CD4-positive, alpha-beta memory T cell (primary cell): ENCODE measurements at regions of chr3 and their contacts with region 1.

Region 1: DNA sequence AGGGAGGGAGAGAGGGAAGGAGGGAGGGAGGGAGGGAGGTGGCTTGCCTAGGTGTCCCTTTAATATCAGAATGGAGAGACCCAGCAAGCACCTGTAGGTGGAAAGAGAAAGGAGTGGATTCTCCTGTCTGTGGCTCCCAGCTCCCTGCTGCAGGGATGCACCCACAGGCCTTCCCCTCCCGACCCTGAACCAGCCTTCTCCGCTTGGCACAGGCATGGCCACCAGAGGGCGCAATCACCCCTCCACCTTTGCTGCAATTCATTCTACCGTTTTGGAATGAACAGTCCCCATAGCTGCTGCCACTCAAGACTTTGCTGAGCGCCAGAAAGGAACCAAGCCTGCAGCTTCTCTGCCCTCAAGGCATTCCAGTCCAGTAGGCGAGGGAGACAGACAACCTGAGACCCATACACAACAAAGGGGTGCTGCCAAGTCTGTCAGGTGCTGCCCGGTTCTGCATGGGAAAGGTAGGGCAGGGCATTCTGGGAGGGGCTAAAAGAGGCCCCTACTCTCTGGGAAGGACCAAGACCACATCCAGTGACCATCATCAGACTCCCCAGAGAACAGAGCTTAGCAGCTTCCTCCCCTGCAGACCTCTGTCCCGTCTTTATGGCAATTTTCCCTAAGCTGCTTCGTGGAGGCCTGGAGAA is 4.9 kb downstream of the TLR9 start:
- DNase-seq: peak; percentile 81 to 86 (median 83)
- H3K4me3 ChIP-seq: no peak overlapping the region
- H3K4me3 Mint-ChIP-seq: peak overlapping the region in 7 of 8 donors; percentile 52 to 85 (median 67)
- H3K27ac ChIP-seq: peak overlapping the region; percentile 44
- H3K27ac Mint-ChIP-seq: peak overlapping the region; percentile 61 to 93 (median 84)
- H3K4me1 ChIP-seq: peaks cover 98% of the 10 kb centered on the region
- H3K4me1 Mint-ChIP-seq: peaks cover 50 to 99% (median 80%) of the 10 kb centered on the region in 4 donors
- H3K27me3 ChIP-seq: no peaks in the 10 kb centered on the region
- H3K27me3 Mint-ChIP-seq: no peaks in the 10 kb centered on the region

Region 2: GRCh38 chr3:52001443-52001974 is 219.0 kb before region 1 on chr3:
- CTCF ChIA-PET with region 1: interaction called, 4 read pairs
- POLR2A ChIA-PET with region 1: no interaction called
- intact Hi-C with region 1: loop called (anchors 1 kb)
- DNase-seq: peak; percentile 81 to 86 (median 84)
- H3K4me3 ChIP-seq: no peak overlapping the region
- H3K4me3 Mint-ChIP-seq: peak overlapping the region in 5 of 8 donors; percentile 4 to 26 (median 8)
- H3K27ac ChIP-seq: no peak overlapping the region
- H3K27ac Mint-ChIP-seq: peak overlapping the region in 4 of 7 donors; percentile 46 to 80 (median 60)
- H3K4me1 ChIP-seq: peaks cover 21% of the 10 kb centered on the region
- H3K4me1 Mint-ChIP-seq: peaks cover 3 to 22% (median 12%) of the 10 kb centered on the region in 4 donors
- H3K27me3 ChIP-seq: no peaks in the 10 kb centered on the region
- H3K27me3 Mint-ChIP-seq: no peaks in the 10 kb centered on the region

Region 3: GRCh38 chr3:52204337-52205073 is 16.0 kb before region 1 on chr3:
- CTCF ChIA-PET with region 1: interaction called, 21 read pairs
- POLR2A ChIA-PET with region 1: interaction called, 4 read pairs
- intact Hi-C with region 1: loop called (anchors 2 kb)
- DNase-seq: no peak
- H3K4me3 ChIP-seq: no peak overlapping the region
- H3K4me3 Mint-ChIP-seq: no peak overlapping the region
- H3K27ac ChIP-seq: no peak overlapping the region
- H3K27ac Mint-ChIP-seq: peak overlapping the region in 3 of 7 donors; percentile 42 to 50 (median 46)
- H3K4me1 ChIP-seq: peaks cover 28% of the 10 kb centered on the region
- H3K4me1 Mint-ChIP-seq: peaks cover 17 to 49% (median 29%) of the 10 kb centered on the region in 4 donors
- H3K27me3 ChIP-seq: no peaks in the 10 kb centered on the region
- H3K27me3 Mint-ChIP-seq: no peaks in the 10 kb centered on the region

Region 4: DNA sequence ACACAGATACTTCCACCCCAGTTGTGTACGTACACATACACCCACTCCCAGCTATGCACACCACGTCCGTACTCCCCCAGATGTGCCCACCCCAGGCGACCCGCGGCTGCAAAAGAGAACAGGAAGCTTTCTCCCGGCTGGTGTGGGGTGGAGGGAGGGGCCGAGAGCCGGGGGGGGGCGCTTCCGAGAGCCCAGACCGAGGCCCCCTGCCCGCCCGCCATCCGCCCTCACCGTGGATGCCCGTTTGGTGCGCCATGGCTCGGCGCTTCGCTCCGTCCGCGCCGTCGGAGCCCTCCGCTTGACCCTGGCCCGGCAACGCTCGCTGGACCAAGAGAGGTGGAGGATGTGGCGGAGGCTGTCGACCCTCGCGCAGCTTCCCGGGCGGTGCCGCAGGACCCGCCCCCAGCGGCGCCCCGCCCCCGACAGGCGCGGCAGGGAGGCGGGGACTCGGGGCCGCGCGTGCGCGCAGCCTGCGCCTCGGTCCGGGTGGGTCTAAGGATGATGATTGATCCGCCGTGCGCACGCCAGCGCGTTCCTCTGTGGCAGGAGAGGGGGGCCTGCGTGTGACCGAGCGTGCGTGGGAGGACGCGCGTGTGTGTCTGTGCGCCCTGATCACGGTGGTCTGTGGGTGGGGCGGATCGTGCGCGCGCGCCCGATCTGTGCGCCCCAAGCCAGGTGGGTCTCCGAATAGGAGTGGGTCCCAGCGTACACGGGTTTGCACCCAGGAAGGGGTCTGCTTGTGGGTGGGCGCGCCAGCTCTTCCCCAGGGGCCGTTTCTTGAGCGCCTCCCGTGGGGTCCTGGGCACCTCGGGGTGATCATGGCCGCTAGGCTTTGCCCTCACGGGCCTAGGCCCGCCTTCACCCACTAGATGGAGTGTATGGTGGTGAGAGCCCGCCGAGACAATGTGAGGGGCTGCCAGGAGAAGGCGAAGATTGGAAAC is 18.5 kb after region 1 on chr3 and contains the start of gene TWF2:
- CTCF ChIA-PET with region 1: interaction called, 179 read pairs
- POLR2A ChIA-PET with region 1: interaction called, 23 read pairs
- intact Hi-C with region 1: loop called (anchors 2 kb)
- DNase-seq: peak; percentile 88 to 93 (median 89)
- H3K4me3 ChIP-seq: peak within 1 kb of the TSS; percentile 83 to 93
- H3K4me3 Mint-ChIP-seq: peak within 1 kb of the TSS; percentile 93 to 99 (median 98)
- H3K27ac ChIP-seq: peak within 1 kb of the TSS; percentile 92
- H3K27ac Mint-ChIP-seq: peak within 1 kb of the TSS; percentile 82 to 98 (median 95)
- H3K4me1 ChIP-seq: peaks cover 79% of the 10 kb centered on the region
- H3K4me1 Mint-ChIP-seq: peaks cover 43 to 92% (median 68%) of the 10 kb centered on the region in 4 donors
- H3K27me3 ChIP-seq: no peaks in the 10 kb centered on the region
- H3K27me3 Mint-ChIP-seq: no peaks in the 10 kb centered on the region
- total RNA-seq, gene TWF2: 69.3 to 76.1 TPM

Region 5: DNA sequence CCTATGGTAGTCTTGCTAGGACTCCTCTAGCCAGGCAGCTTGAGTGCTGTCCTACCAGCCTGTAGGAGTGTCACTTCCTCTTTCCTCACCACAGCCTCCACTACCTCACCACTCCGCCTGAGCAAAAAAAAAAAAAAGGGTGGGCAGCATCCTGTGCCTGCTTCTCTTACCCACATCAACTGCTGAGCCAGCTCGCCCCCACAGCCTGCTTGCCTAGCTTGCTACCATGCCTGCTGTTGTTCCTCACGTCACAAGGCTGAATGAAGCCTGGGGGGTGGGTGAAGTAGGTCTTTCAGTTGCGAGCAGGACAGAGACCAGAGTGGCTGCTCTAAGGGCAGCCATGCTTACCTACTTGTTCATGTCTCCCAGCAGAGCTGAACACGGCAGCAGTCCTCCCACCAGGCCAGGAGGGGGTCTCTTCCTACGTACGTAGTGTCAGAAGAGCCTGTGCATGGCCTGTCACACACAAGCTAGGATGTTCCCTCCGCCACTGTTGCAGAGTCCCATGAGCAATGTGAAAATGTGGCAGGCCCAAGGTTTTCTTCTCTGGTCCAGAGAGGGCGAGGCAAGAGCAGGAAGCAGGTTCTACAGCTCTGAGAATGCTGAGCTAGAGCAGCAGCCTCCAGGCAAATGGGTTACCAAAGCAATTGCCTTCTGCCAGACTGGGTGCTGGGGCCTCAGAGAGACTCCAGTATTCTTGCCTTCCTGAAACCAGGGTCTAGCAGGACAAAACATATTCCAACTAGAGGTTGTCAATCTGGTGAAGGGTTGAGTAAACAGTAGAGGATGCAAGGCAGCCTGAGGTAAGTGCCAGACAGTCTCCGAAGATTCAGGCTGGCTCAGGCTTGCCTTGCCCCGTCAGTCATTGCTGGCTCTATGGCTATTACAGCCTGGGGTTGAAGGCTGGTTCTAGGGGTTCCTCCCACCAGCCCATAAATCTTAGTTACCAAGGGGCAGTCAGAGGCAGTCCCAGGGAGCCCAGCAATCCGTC is 33.1 kb after region 1 on chr3:
- CTCF ChIA-PET with region 1: interaction called, 16 read pairs
- POLR2A ChIA-PET with region 1: interaction called, 17 read pairs
- intact Hi-C with region 1: no loop called
- DNase-seq: peak; percentile 90 to 97 (median 93)
- H3K4me3 ChIP-seq: peak overlapping the region; percentile 10 to 16
- H3K4me3 Mint-ChIP-seq: peak overlapping the region; percentile 85 to 97 (median 90)
- H3K27ac ChIP-seq: peak overlapping the region; percentile 86
- H3K27ac Mint-ChIP-seq: peak overlapping the region; percentile 97 to 100 (median 100)
- H3K4me1 ChIP-seq: peaks cover 99% of the 10 kb centered on the region
- H3K4me1 Mint-ChIP-seq: peaks cover 54 to 99% (median 82%) of the 10 kb centered on the region in 4 donors
- H3K27me3 ChIP-seq: no peaks in the 10 kb centered on the region
- H3K27me3 Mint-ChIP-seq: no peaks in the 10 kb centered on the region

Region 6: DNA sequence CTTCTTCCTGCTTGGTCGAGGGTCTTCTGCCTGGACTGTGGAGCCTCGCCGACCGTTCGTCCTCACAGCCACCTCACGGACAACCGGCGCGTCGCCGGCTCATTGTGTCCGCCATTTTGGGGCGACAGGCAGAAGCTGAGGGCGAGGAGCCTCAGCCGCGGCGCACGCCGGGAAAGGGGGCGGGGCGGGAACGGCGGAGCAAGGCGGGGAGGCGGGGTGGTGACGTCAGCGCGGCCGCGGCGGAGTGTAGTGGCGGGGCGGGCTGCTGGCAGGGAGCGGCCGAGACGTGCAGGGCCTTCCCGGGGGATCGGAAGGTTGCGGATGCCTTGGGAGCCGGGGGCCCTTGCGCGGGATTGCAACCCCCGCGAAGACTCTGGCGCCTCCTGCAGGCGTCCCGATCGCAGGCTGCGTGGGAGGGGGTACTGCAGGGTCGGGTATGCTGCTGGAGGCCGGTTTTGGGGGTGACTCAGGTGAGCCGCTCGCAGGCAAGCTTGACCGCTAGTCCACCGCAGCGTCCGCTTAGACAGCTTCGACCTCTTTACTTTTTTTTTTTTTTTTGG is 58.1 kb after region 1 on chr3 and contains the start of gene WDR82:
- CTCF ChIA-PET with region 1: interaction called, 53 read pairs
- POLR2A ChIA-PET with region 1: interaction called, 156 read pairs
- intact Hi-C with region 1: no loop called
- DNase-seq: peak; percentile 94 to 97 (median 95)
- H3K4me3 ChIP-seq: peak within 1 kb of the TSS; percentile 58 to 71
- H3K4me3 Mint-ChIP-seq: peak within 1 kb of the TSS; percentile 92 to 99 (median 98)
- H3K27ac ChIP-seq: peak within 1 kb of the TSS; percentile 87
- H3K27ac Mint-ChIP-seq: peak within 1 kb of the TSS; percentile 96 to 100 (median 100)
- H3K4me1 ChIP-seq: peaks cover 76% of the 10 kb centered on the region
- H3K4me1 Mint-ChIP-seq: peaks cover 40 to 87% (median 56%) of the 10 kb centered on the region in 4 donors
- H3K27me3 ChIP-seq: no peaks in the 10 kb centered on the region
- H3K27me3 Mint-ChIP-seq: peaks cover 0 to 3% of the 10 kb centered on the region in 2 donors
- total RNA-seq, gene WDR82: 149 to 150 TPM

Region 7: GRCh38 chr3:52444860-52445793 is 224.6 kb after region 1 on chr3 and contains the start of gene SEMA3G:
- CTCF ChIA-PET with region 1: interaction called, 6 read pairs
- POLR2A ChIA-PET with region 1: no interaction called
- intact Hi-C with region 1: loop called (anchors 5 kb)
- DNase-seq: peak; percentile 62 to 84 (median 66)
- H3K4me3 ChIP-seq: peak within 1 kb of the TSS in 1 of 2 donors; percentile 9
- H3K4me3 Mint-ChIP-seq: peak within 1 kb of the TSS in 3 of 8 donors; percentile 8 to 29 (median 12)
- H3K27ac ChIP-seq: no peak within 1 kb of the TSS
- H3K27ac Mint-ChIP-seq: peak within 1 kb of the TSS in 3 of 7 donors; percentile 10 to 76 (median 32)
- H3K4me1 ChIP-seq: peaks cover 14% of the 10 kb centered on the region
- H3K4me1 Mint-ChIP-seq: peaks cover 6 to 16% (median 12%) of the 10 kb centered on the region in 4 donors
- H3K27me3 ChIP-seq: no peaks in the 10 kb centered on the region
- H3K27me3 Mint-ChIP-seq: no peaks in the 10 kb centered on the region
- total RNA-seq, gene SEMA3G: 0.17 to 0.22 TPM

Region 8: DNA sequence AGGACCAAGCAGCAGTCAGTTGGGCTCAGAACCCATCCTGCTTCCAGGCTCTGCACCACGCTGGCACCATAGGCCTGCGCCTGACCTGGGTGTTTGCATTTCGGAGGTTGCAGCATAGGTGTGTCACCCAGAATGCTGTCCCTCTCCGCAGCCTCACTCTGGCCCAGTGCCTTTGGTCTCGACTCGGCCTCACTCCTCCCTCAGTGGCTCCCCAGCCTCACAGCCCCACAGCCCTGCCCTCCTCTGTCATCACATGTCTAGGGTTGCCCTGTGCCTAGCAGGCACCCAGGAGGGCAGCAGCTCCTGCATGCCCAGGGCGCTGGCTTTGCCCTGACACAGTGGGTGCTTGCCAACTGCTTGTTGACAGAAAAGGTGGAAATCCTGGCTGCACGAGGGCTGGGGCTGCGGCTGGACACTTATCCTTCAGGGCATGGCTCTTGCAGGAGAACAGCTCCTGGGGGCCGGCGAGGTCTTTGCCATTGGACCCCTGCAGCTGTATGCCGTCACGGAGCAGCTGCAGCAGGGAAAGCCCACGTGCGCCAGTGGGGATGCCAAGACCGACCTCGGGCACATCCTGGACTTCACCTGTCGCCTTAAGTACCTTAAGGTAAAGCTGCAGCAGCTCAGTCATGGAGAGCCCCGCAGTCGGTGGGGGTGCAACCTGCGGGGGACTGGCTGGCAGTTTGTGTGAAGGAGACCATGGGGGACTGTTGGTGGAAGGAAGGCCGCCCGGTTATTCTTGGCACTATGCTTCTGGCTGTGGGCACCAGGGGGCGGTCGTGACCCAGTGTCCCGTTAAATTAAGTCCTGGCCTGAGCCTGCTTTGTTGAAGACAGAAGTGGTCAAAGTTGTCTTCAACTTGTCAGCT is 251.1 kb after region 1 on chr3:
- CTCF ChIA-PET with region 1: no interaction called
- POLR2A ChIA-PET with region 1: no interaction called
- intact Hi-C with region 1: no loop called
- DNase-seq: no peak
- H3K4me3 ChIP-seq: no peak overlapping the region
- H3K4me3 Mint-ChIP-seq: no peak overlapping the region
- H3K27ac ChIP-seq: no peak overlapping the region
- H3K27ac Mint-ChIP-seq: no peak overlapping the region
- H3K4me1 ChIP-seq: no peaks in the 10 kb centered on the region
- H3K4me1 Mint-ChIP-seq: peaks cover 0 to 11% (median 4%) of the 10 kb centered on the region in 4 donors
- H3K27me3 ChIP-seq: no peaks in the 10 kb centered on the region
- H3K27me3 Mint-ChIP-seq: no peaks in the 10 kb centered on the region